Activated T-helper 1 cell treated with anti-CD3 and anti-CD28 coated beads, Interleukin-12 subunit alpha, Interleukin-12 subunit beta, Interleukin-2, Interleukin-4 antibody, amounts not matched to agents 30 ng/mL and 10 ng/mL and 1 ng/mL, durations not matched to agents 14 hours and 24 hours and 36 hours (primary cell): ENCODE measurements at regions of chr22 and their contacts with region 1.

Region 1: GRCh38 chr22:28379075-28379779 is 300.4 kb downstream of the TTC28 start:
- DNase-seq: no peak
- H3K4me3 Mint-ChIP-seq: no peak overlapping the region
- H3K27ac Mint-ChIP-seq: peak overlapping the region; percentile 7
- H3K4me1 Mint-ChIP-seq: peaks cover 47% of the 10 kb centered on the region
- H3K27me3 Mint-ChIP-seq: no peaks in the 10 kb centered on the region

Region 2: DNA sequence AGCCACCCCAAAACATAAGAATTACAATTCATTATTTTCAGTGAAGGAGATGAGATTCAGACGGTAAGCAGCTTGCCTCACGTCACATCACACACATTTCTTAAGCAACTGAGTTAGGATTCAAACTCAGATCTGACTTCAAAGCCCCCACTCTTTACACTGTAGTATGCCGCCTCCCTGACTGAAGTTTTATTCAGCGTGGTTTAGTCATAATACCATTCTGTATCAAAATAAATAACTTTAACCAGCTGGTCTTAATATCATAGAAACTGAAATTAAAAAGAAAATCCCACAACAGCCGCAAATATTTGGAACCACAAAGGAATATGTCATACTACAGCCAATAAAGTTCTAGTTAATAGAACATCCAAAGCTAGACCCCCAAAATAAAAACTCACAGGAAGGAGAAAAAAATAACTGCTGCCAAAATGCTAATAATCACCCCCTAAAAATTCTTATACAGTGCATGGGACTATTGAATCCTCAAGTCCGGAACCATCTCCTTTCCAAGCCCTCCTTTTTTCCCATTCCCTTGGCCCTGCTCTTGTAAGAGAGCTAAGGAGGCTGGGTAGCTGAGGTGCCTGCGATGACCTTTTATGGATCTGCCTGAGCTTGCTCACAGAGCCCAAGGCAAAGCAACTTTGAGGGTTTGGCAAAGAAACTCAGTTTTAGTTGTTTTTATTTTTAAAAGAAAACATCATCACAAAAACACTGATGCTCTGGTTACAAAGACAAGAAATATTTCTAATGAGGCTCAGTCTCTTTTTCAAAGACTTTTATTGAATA is 34.1 kb before region 1 on chr22:
- intact Hi-C with region 1: no loop called
- DNase-seq: no peak
- H3K4me3 Mint-ChIP-seq: no peak overlapping the region
- H3K27ac Mint-ChIP-seq: no peak overlapping the region
- H3K4me1 Mint-ChIP-seq: peaks cover 5% of the 10 kb centered on the region
- H3K27me3 Mint-ChIP-seq: no peaks in the 10 kb centered on the region

Region 3: DNA sequence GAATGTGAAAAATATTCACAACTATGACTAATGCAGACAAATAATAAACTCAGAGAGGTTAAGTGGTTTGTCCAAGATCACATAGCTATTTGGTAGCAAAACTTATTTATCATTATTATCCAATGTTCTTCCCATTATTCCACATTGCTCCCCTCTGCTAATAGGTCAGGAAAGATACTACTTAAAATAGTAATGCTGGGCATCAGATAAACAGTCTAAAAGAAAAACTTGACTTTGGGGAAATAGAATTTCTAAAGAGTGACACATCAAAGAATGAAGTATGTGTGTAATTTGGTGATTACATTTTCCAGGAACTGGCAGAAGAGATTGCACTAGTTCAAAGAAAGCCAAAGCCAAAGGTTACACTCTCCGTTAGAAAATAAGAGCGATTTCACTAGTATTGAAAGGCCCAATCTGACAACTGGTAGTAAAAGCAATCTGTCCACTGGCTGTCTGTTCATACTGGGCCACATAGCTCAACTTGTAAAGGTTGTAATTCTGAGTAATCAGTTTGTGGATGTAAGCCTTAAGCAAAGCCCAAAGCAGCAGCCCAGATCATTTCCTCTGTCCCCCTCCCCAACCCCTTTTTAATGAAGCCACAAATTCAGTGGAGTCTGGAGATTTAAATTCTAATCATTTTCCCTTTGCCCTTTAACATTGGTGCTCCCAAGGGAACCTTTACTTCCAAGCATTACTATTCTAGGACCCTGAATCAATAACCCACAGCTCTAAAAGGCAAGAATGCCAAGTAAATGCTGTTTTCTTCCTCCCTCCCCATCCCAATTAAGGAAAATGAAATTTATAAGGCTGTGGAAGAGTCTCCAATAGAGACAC is 16.9 kb after region 1 on chr22:
- intact Hi-C with region 1: loop called (anchors 1 kb)
- DNase-seq: no peak
- H3K4me3 Mint-ChIP-seq: peak overlapping the region; percentile 13
- H3K27ac Mint-ChIP-seq: peak overlapping the region; percentile 80
- H3K4me1 Mint-ChIP-seq: peaks cover 47% of the 10 kb centered on the region
- H3K27me3 Mint-ChIP-seq: no peaks in the 10 kb centered on the region

Region 4: DNA sequence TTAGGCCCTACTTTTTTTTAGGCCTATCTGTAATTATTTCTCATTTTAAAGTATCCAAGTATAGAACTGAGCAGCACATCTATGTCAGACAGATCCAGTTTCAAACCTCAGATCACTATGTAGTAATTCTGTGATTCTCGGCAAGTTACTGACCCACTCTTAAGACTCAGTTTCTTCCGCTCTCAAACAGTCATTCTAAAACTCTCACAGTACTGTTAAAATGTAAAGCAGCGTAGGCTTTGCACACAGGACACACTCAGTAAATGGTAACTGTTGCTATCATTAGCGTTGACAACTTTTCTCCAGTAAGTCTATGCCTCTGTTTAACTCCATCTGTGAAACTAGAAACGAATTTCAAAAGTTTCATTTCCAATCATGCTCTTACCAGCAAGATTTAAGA is 23.3 kb after region 1 on chr22:
- intact Hi-C with region 1: loop called (anchors 1 kb)
- DNase-seq: no peak
- H3K4me3 Mint-ChIP-seq: peak overlapping the region; percentile 9
- H3K27ac Mint-ChIP-seq: peak overlapping the region; percentile 74
- H3K4me1 Mint-ChIP-seq: peaks cover 33% of the 10 kb centered on the region
- H3K27me3 Mint-ChIP-seq: no peaks in the 10 kb centered on the region